B cell (primary cell): ENCODE measurements at regions of chr16 and their contacts with region 1.

Region 1: DNA sequence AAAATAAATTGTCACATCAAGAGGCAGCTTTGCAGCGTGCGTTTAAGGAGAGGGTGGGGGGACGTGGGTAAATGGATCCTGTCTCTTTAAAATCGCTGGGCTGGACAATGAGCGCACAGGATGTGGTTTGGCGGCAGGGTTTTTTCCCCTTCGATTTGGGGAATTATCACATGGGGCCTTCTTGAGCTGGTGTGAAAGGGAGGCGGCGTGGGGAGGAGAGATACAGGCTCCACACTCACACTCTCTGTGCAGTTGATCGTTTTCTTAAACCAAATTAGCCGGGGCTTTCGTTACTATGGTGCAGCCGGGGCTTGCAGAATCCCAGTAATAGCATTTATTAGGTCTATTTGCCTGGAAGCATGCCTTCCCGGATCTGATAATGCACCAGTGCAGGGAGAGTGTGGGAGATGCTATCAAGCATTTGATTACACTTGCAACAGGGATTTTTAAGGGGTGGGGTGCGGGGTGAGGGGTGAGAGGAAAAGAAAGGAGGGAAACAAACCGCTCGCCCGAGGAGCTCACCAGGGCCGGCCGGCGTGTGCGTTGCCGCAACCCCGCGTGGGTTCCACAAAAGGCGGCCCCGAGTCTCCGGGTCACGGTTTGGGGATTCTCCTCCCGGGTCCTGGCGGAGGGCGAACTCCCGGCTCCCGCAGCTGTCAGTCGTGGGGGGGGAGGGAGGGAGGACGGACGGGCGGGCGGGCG is 58.9 kb upstream of the GSE1 start:
- DNase-seq: peak; percentile 92
- ATAC-seq: peak; percentile 61
- H3K4me3 ChIP-seq: peak overlapping the region; percentile 46 to 99 (median 87)
- H3K4me3 Mint-ChIP-seq: peak overlapping the region; percentile 92
- H3K27ac ChIP-seq: peak overlapping the region; percentile 79 to 92
- H3K27ac Mint-ChIP-seq: peak overlapping the region; percentile 95
- H3K4me1 ChIP-seq: peaks cover 21 to 33% of the 10 kb centered on the region in 2 donors
- H3K4me1 Mint-ChIP-seq: peaks cover 38% of the 10 kb centered on the region
- H3K27me3 ChIP-seq: no peaks in the 10 kb centered on the region
- H3K27me3 Mint-ChIP-seq: no peaks in the 10 kb centered on the region
- CTCF ChIP-seq: no peak

Region 2: DNA sequence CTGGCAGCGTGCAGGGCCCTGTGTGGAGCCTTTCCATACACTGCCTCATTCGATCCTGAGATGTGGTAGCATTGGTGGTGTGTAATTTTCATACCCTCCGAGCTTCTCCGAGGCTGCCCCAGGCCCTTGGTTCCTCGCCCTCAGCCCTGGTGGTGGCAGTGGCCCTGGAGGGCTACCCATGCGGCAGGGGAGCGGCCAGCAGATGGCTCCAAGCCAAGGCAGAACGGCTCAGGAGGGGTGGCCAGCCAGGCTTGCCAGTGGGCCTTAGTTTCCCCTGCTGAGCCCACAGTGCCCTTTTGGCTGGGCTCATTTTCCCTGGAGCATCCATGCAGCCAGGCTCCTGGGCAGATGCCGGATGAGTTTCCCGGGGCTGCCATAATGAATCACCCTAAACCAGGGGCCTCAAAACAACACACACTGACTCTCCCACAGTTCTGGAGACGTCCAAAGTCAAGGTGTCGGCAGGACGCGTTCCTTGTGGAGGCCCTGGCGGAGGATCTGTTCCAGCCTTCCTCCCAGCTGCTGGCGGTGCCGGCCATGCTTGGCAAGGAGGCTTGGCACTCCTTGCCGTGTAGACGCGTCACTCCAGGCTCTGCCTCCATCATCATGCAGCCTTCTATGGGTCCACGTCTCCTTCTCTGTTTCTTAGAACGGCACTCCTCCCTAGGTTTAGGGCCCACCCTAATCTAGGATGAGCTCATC is 99.9 kb before region 1 on chr16:
- CTCF ChIA-PET with region 1: no interaction called
- POLR2A ChIA-PET with region 1: no interaction called
- intact Hi-C with region 1: no loop called
- DNase-seq: no peak
- ATAC-seq: no peak
- H3K4me3 ChIP-seq: no peak overlapping the region
- H3K4me3 Mint-ChIP-seq: no peak overlapping the region
- H3K27ac ChIP-seq: no peak overlapping the region
- H3K27ac Mint-ChIP-seq: no peak overlapping the region
- H3K4me1 ChIP-seq: peaks cover 3 to 6% of the 10 kb centered on the region in 2 donors
- H3K4me1 Mint-ChIP-seq: peaks cover 4% of the 10 kb centered on the region
- H3K27me3 ChIP-seq: peaks cover 0 to 54% (median 6%) of the 10 kb centered on the region in 4 experiments
- H3K27me3 Mint-ChIP-seq: peaks cover 21% of the 10 kb centered on the region
- CTCF ChIP-seq: no peak

Region 3: GRCh38 chr16:85479972-85480751 is 74.1 kb before region 1 on chr16:
- CTCF ChIA-PET with region 1: interaction called, 7 read pairs
- POLR2A ChIA-PET with region 1: no interaction called
- intact Hi-C with region 1: loop called (anchors 5 kb)
- DNase-seq: peak; percentile 72
- ATAC-seq: peak; percentile 70
- H3K4me3 ChIP-seq: no peak overlapping the region
- H3K4me3 Mint-ChIP-seq: peak overlapping the region; percentile 32
- H3K27ac ChIP-seq: no peak overlapping the region
- H3K27ac Mint-ChIP-seq: no peak overlapping the region
- H3K4me1 ChIP-seq: peaks cover 11 to 14% of the 10 kb centered on the region in 2 donors
- H3K4me1 Mint-ChIP-seq: peaks cover 15% of the 10 kb centered on the region
- H3K27me3 ChIP-seq: peaks cover 0 to 18% (median 7%) of the 10 kb centered on the region in 4 experiments
- H3K27me3 Mint-ChIP-seq: peaks cover 16% of the 10 kb centered on the region
- CTCF ChIP-seq: peak; percentile 69

Region 4: GRCh38 chr16:85528528-85529387 is 25.5 kb before region 1 on chr16:
- CTCF ChIA-PET with region 1: interaction called, 15 read pairs
- POLR2A ChIA-PET with region 1: no interaction called
- intact Hi-C with region 1: no loop called
- DNase-seq: peak; percentile 50
- ATAC-seq: peak; percentile 33
- H3K4me3 ChIP-seq: no peak overlapping the region
- H3K4me3 Mint-ChIP-seq: no peak overlapping the region
- H3K27ac ChIP-seq: no peak overlapping the region
- H3K27ac Mint-ChIP-seq: peak overlapping the region; percentile 53
- H3K4me1 ChIP-seq: peaks cover 0 to 5% of the 10 kb centered on the region in 2 donors
- H3K4me1 Mint-ChIP-seq: no peaks in the 10 kb centered on the region
- H3K27me3 ChIP-seq: peaks cover 0 to 23% (median 6%) of the 10 kb centered on the region in 4 experiments
- H3K27me3 Mint-ChIP-seq: peaks cover 12% of the 10 kb centered on the region
- CTCF ChIP-seq: peak; percentile 68

Region 5: DNA sequence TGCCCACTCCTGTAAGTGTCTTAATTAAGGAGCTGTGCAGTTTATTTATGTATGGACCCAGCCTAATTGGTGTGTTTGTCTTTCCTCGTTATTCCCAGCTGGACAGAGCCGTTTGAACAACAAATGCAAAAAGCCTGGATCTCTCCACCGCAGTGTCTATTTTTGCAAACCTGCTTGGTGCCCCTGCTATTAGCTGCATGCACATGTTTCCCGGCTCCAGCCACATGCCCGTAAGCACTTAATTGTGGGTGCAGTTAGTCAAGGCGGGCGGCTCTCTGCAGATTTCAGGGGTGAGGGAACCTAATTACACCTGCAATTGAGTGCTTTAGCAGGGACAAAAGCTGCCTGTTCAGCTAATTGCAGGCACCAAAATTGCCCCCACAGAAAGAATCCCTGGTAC is 15.2 kb before region 1 on chr16:
- CTCF ChIA-PET with region 1: no interaction called
- POLR2A ChIA-PET with region 1: no interaction called
- intact Hi-C with region 1: no loop called
- DNase-seq: no peak
- ATAC-seq: no peak
- H3K4me3 ChIP-seq: no peak overlapping the region
- H3K4me3 Mint-ChIP-seq: no peak overlapping the region
- H3K27ac ChIP-seq: no peak overlapping the region
- H3K27ac Mint-ChIP-seq: no peak overlapping the region
- H3K4me1 ChIP-seq: peaks cover 0 to 12% of the 10 kb centered on the region in 2 donors
- H3K4me1 Mint-ChIP-seq: peaks cover 6% of the 10 kb centered on the region
- H3K27me3 ChIP-seq: peaks cover 0 to 9% (median 4%) of the 10 kb centered on the region in 4 experiments
- H3K27me3 Mint-ChIP-seq: peaks cover 2% of the 10 kb centered on the region
- CTCF ChIP-seq: no peak

Region 6: GRCh38 chr16:85569615-85570212 is 15.5 kb after region 1 on chr16:
- CTCF ChIA-PET with region 1: interaction called, 20 read pairs
- POLR2A ChIA-PET with region 1: interaction called, 11 read pairs
- intact Hi-C with region 1: loop called (anchors 1 kb)
- DNase-seq: peak; percentile 46
- ATAC-seq: peak; percentile 37
- H3K4me3 ChIP-seq: peak overlapping the region in 4 of 5 experiments; percentile 0 to 43 (median 12)
- H3K4me3 Mint-ChIP-seq: peak overlapping the region; percentile 68
- H3K27ac ChIP-seq: peak overlapping the region; percentile 39 to 70
- H3K27ac Mint-ChIP-seq: peak overlapping the region; percentile 84
- H3K4me1 ChIP-seq: peaks cover 38 to 44% of the 10 kb centered on the region in 2 donors
- H3K4me1 Mint-ChIP-seq: peaks cover 66% of the 10 kb centered on the region
- H3K27me3 ChIP-seq: no peaks in the 10 kb centered on the region
- H3K27me3 Mint-ChIP-seq: no peaks in the 10 kb centered on the region
- CTCF ChIP-seq: no peak

Region 7: DNA sequence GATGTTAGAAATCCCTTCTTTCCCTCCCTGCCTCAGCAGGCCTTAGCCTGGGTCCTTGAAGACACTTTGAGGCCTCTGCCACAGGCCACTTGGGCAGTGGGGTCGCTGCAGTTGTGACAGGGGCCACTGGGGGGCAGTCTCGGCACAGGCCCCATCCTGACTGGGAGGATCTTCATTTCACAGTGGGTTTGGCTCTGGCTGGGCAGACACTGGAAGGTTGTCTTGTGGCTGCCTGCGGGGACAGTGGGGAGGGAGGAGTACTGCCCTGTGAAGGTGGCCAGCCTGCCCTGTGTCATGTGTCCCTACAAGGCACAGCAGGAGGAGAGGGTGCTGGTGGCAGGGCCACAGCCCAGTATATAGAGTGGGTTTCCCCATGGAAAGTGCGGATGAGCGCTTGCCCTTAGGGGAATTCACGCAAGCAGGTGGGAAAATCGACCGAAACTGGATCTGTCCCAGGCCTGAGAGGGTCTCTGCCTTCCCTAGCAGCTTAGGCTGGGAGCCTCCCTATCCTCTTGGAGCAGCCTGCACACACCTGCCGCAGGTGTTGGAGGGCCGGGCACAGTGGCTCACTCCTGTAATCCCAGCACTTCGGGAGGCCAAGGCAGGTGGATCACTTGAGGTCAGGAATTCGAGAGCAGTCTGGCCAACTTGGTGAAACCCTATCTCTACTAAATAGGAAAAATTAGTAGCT is 105.7 kb after region 1 on chr16:
- CTCF ChIA-PET with region 1: no interaction called
- POLR2A ChIA-PET with region 1: no interaction called
- intact Hi-C with region 1: no loop called
- DNase-seq: peak; percentile 73
- ATAC-seq: peak; percentile 94
- H3K4me3 ChIP-seq: no peak overlapping the region
- H3K4me3 Mint-ChIP-seq: no peak overlapping the region
- H3K27ac ChIP-seq: no peak overlapping the region
- H3K27ac Mint-ChIP-seq: peak overlapping the region; percentile 76
- H3K4me1 ChIP-seq: no peaks in the 10 kb centered on the region
- H3K4me1 Mint-ChIP-seq: peaks cover 4% of the 10 kb centered on the region
- H3K27me3 ChIP-seq: no peaks in the 10 kb centered on the region
- H3K27me3 Mint-ChIP-seq: no peaks in the 10 kb centered on the region
- CTCF ChIP-seq: peak; percentile 90

Region 8: GRCh38 chr16:85799497-85800337 is 245.5 kb after region 1 on chr16 and contains the starts of genes COX4I1 and EMC8:
- CTCF ChIA-PET with region 1: no interaction called
- POLR2A ChIA-PET with region 1: no interaction called
- intact Hi-C with region 1: loop called (anchors 10 kb)
- DNase-seq: peak; percentile 95
- ATAC-seq: peak; percentile 86
- H3K4me3 ChIP-seq: peak within 1 kb of the TSS; percentile 73 to 93 (median 78)
- H3K4me3 Mint-ChIP-seq: peak within 1 kb of the TSS; percentile 92
- H3K27ac ChIP-seq: peak within 1 kb of the TSS; percentile 82 to 97
- H3K27ac Mint-ChIP-seq: peak within 1 kb of the TSS; percentile 98
- H3K4me1 ChIP-seq: peaks cover 19 to 23% of the 10 kb centered on the region in 2 donors
- H3K4me1 Mint-ChIP-seq: peaks cover 57% of the 10 kb centered on the region
- H3K27me3 ChIP-seq: no peaks in the 10 kb centered on the region
- H3K27me3 Mint-ChIP-seq: no peaks in the 10 kb centered on the region
- CTCF ChIP-seq: no peak
- total RNA-seq, gene COX4I1: 767 and 813 TPM in 2 replicates
- total RNA-seq, gene EMC8: 32.9 and 33.1 TPM in 2 replicates

Region 9: GRCh38 chr16:87387942-87388817 is 1833.9 kb after region 1 on chr16:
- CTCF ChIA-PET with region 1: no interaction called
- POLR2A ChIA-PET with region 1: no interaction called
- intact Hi-C with region 1: loop called (anchors 10 kb)
- DNase-seq: peak; percentile 96
- ATAC-seq: peak; percentile 56
- H3K4me3 ChIP-seq: peak overlapping the region; percentile 19 to 39 (median 35)
- H3K4me3 Mint-ChIP-seq: peak overlapping the region; percentile 68
- H3K27ac ChIP-seq: peak overlapping the region; percentile 94 to 98
- H3K27ac Mint-ChIP-seq: peak overlapping the region; percentile 98
- H3K4me1 ChIP-seq: peaks cover 36 to 52% of the 10 kb centered on the region in 2 donors
- H3K4me1 Mint-ChIP-seq: peaks cover 50% of the 10 kb centered on the region
- H3K27me3 ChIP-seq: no peaks in the 10 kb centered on the region
- H3K27me3 Mint-ChIP-seq: no peaks in the 10 kb centered on the region
- CTCF ChIP-seq: no peak